Naive thymus-derived CD4-positive, alpha-beta T cell (primary cell): ENCODE measurements at regions of chr6 and their contacts with region 1.

Region 1: GRCh38 chr6:33535104-33535603 is 44.9 kb downstream of the BAK1 start:
- DNase-seq: no peak
- ATAC-seq: no peak
- H3K4me3 ChIP-seq: no peak overlapping the region
- H3K4me3 Mint-ChIP-seq: no peak overlapping the region
- H3K27ac ChIP-seq: no peak overlapping the region
- H3K27ac Mint-ChIP-seq: peak overlapping the region in 3 of 9 donors; percentile 9 to 74 (median 50)
- H3K4me1 ChIP-seq: peaks cover 0 to 10% of the 10 kb centered on the region in 2 donors
- H3K4me1 Mint-ChIP-seq: peaks cover 9 to 32% (median 27%) of the 10 kb centered on the region in 7 donors
- H3K27me3 ChIP-seq: no peaks in the 10 kb centered on the region
- H3K27me3 Mint-ChIP-seq: peaks cover 0 to 2% (median 0%) of the 10 kb centered on the region in 5 donors

Region 2: GRCh38 chr6:33547499-33547898 is 12.3 kb after region 1 on chr6:
- CTCF ChIA-PET with region 1: interaction called, 3 read pairs
- POLR2A ChIA-PET with region 1: interaction called, 8 read pairs
- intact Hi-C with region 1: loop called in 1 of 2 experiments (anchors 2 kb)
- DNase-seq: no peak
- ATAC-seq: no peak
- H3K4me3 ChIP-seq: no peak overlapping the region
- H3K4me3 Mint-ChIP-seq: peak overlapping the region in 6 of 10 donors; percentile 6 to 76 (median 46)
- H3K27ac ChIP-seq: no peak overlapping the region
- H3K27ac Mint-ChIP-seq: peak overlapping the region in 8 of 9 donors; percentile 61 to 89 (median 79)
- H3K4me1 ChIP-seq: peaks cover 10 to 14% of the 10 kb centered on the region in 2 donors
- H3K4me1 Mint-ChIP-seq: peaks cover 12 to 26% (median 22%) of the 10 kb centered on the region in 7 donors
- H3K27me3 ChIP-seq: no peaks in the 10 kb centered on the region
- H3K27me3 Mint-ChIP-seq: no peaks in the 10 kb centered on the region

Region 3: DNA sequence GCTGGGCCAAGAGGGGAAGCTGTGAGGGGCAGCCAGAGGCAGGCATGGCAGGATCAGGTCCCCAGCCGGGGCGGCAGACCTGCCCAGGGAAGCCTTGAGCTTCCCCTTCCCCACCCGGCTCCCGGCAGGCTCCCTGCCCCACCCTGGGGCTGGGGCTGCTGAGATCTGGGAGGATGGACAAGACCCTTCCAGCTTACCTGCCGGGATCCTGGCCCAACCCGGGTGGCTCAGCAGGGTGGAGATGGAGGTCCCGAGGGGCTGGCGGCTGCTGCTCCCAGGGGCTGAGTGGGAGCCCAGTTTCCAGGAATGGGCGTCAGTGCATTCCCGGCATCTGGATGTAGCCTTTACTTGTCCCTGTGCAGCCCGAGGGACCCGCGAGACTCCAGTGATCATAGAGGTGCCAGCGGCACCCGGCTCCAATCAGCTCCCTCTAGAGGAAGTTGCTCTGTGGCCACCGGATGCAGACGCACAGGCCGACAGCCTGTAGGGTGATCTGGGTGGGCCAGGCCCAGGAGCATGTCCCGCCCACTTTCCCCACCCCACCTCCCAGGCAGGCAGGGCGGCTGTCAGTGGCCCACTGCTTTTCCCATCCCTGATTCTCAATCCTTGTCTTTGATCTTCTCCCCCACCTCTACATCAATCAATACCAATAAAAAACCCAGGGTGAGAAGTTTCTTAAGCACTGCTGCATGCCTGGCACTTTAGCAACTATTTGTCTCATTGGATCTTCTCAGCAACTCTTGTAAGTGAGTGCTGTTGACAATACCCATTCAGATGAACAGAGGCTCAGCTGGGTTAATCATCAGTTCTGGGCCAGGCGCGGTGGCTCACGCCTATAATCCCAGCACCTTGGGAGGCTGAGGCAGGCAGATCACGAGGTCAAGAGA is 44.9 kb after region 1 on chr6 and contains the start of gene BAK1:
- CTCF ChIA-PET with region 1: no interaction called
- POLR2A ChIA-PET with region 1: interaction called, 8 read pairs
- intact Hi-C with region 1: loop called in 1 of 2 experiments (anchors 1 kb)
- DNase-seq: peak; percentile 54 to 86 (median 78)
- ATAC-seq: peak; percentile 98
- H3K4me3 ChIP-seq: peak within 1 kb of the TSS; percentile 92
- H3K4me3 Mint-ChIP-seq: peak within 1 kb of the TSS; percentile 93 to 99 (median 96)
- H3K27ac ChIP-seq: peak within 1 kb of the TSS; percentile 83
- H3K27ac Mint-ChIP-seq: peak within 1 kb of the TSS; percentile 94 to 99 (median 97)
- H3K4me1 ChIP-seq: peaks cover 13 to 25% of the 10 kb centered on the region in 2 donors
- H3K4me1 Mint-ChIP-seq: peaks cover 26 to 43% (median 39%) of the 10 kb centered on the region in 7 donors
- H3K27me3 ChIP-seq: no peaks in the 10 kb centered on the region
- H3K27me3 Mint-ChIP-seq: no peaks in the 10 kb centered on the region
- total RNA-seq, gene BAK1: 16.9 to 78.8 (median 22.0) TPM